ENCODE measurements at regions of chr12 and their contacts with region 1.

Region 1: DNA sequence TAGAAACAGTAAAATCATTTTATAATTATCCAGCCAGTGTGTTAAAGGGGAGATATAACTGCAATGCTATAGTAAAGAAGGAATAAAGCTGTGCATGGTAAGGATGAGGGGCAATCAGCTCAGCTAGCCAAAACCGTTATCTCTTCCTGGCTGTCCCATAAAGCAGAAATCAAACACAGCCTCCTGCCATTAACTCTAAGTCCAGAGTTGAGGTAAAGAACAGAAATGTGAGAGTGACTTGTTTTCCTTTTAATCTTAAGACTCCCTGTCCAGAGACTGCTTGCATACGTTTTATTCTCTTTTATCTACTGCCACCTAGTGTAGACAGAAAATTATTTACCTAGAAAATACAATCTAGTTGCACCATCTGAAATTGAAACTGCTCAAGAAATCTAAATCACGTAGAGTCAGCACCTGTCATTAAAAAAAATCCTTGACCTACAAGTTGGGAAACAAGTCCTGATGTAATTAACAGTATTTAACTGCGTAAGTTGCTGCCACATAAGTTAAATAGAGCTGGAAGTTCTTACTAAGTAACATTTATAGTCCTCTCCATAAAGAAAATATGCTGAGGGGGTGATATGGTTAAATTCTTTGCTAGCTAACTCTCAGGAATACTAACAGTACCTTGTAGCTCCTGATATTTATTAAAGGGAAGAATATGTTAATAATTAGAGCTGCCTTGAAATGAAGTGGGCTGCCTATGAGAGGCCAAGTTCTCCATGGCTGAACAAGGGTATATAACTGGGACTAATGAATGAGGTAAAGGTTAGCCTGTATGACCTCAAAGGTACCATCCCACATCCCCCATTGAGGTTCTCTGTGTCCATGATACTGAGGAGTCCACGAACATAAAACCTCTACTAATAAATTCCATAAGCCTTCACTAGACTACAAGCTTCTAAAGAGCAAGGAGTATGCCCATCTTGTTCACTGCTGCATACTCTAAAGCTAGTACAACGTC is 62.7 kb downstream of the GALNT4 start:
- DNase-seq: peak in 2 of 5 donors; percentile 81 to 82
- H3K4me3 ChIP-seq: peak overlapping the region in 2 of 3 donors; percentile 43 to 44
- H3K27ac ChIP-seq: peak overlapping the region; percentile 1 to 56
- H3K4me1 ChIP-seq: peaks cover 0 to 3% (median 0%) of the 10 kb centered on the region in 3 donors
- H3K27me3 ChIP-seq: no peaks in the 10 kb centered on the region
- CTCF ChIP-seq: peak; percentile 63

Region 2: GRCh38 chr12:89019408-89020120 is 442.4 kb before region 1 on chr12:
- intact Hi-C with region 1: loop called (anchors 10 kb)
- DNase-seq: peak; percentile 59 to 94 (median 89)
- H3K4me3 ChIP-seq: peak overlapping the region; percentile 57 to 76 (median 74)
- H3K27ac ChIP-seq: no peak overlapping the region
- H3K4me1 ChIP-seq: no peaks in the 10 kb centered on the region
- H3K27me3 ChIP-seq: no peaks in the 10 kb centered on the region
- CTCF ChIP-seq: peak; percentile 89

Region 3: DNA sequence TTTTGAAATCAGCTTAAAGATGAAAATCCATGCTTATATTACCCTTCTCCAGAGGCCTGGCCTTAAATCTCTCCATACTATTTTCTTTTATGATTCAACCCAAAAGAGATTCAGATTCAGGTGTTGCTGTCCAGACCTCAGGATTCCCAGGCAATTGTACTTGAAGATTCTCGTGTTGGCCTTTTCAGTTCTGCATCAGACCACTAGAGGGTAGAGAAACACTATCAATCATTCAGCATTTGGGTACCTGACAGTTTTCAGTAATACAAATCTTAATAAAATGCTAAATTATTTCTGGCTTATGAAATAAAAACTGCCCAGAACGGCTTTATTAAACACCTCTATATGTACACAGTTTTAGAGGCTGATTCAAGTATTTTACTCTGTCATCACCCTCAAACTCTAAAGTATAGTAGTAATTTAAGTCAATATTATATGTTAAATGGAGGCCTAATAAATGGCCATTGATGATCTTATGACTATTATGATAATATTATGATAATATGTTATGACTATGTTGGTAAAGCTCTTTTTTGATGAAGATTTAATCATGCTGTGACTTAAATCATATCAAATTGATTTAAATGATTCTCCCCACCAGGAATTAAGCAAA is 410.8 kb before region 1 on chr12:
- intact Hi-C with region 1: loop called (anchors 5 kb)
- DNase-seq: peak in 3 of 5 donors; percentile 19 to 89 (median 77)
- H3K4me3 ChIP-seq: no peak overlapping the region
- H3K27ac ChIP-seq: no peak overlapping the region
- H3K4me1 ChIP-seq: no peaks in the 10 kb centered on the region
- H3K27me3 ChIP-seq: no peaks in the 10 kb centered on the region
- CTCF ChIP-seq: peak; percentile 96

Measured in kidney (tissue), 22 donors.